GM10248 (cell line): ENCODE measurements at regions of chr6 and their contacts with region 1.

Region 1: DNA sequence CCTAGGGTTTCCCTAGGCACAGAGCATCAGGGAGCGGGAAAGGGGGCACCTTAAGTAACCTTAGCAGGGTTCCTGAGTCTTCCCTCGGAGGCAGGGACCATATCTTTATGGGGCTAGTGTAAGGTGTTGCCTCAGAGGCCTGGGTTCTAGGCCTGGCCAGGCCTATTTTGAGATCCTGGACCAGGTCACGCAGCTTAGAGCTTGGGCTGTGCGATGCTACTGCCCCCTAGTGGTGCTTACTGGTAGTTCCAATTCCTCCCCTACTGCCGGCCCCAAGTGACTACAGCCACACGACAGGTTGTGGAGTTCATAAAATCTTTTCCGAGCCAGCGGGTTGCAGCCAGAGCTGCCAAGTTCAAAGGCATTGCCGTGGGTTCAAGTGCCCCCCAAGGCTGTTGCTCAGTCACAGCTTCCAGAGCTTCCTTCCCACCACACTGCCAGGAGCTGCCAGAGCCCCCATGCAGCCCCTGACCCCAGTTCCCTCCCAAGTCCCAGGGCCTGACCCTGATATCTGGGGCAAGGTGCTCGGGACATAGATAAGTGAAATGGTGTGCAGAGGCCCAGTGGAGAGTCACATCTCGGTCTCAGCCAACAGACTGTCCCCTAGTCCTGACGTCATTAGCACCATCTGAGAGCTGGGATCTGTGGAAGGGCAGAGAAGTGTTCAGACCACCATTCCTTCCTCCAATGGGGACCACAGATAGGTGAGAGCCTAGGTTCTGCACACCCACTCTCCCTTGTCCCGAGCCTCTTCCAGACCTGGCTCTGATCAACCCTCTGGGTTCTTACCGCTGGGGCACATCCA is 3.3 kb downstream of the LRRC73 start:
- DNase-seq: peak; percentile 86
- CTCF ChIP-seq: peak; percentile 92

Region 2: GRCh38 chr6:43254138-43254817 is 252.6 kb before region 1 on chr6:
- CTCF ChIA-PET with region 1: interaction called, 16 read pairs
- POLR2A ChIA-PET with region 1: no interaction called
- DNase-seq: no peak
- CTCF ChIP-seq: no peak

Region 3: DNA sequence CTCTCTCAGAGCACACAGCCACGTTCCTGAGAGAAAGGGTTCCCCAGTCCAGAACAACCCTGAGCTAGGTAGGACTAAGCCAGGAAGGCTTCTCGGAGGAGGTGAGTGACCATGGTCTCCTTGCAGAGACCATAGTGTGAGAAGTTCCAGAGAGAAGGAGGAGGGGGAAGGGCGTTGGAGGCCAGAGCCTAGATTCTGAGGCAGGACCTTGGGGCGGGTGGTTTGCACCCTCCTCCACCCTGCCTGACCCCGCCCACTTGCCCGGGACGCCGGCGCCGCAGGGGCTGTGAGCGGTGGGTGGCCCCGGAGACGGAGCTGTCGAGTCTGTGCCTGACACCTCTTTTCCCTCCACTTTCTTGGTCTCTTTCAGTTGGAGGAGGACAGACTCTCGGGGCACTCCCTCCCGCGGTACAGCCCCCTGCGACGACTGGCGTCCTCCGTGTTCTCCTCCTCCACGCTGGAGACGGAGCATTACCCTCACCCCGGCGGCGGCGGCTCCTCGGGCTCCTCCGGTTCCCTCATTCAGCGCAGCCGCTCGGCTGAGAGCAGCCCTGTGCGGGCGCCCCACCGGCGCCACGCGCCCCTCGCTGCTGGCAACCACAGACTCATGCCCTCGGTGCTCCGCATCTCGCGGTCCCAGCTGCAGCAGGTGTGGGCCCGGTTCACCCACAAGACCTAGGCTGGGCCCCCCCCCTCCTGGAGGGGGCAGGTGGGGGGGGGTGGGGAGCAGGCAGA is 237.4 kb before region 1 on chr6:
- CTCF ChIA-PET with region 1: interaction called, 77 read pairs
- POLR2A ChIA-PET with region 1: no interaction called
- DNase-seq: no peak
- CTCF ChIP-seq: no peak

Region 4: GRCh38 chr6:43454696-43455530 is 52.0 kb before region 1 on chr6:
- CTCF ChIA-PET with region 1: interaction called, 70 read pairs
- POLR2A ChIA-PET with region 1: no interaction called
- DNase-seq: peak; percentile 67
- CTCF ChIP-seq: no peak

Region 5: DNA sequence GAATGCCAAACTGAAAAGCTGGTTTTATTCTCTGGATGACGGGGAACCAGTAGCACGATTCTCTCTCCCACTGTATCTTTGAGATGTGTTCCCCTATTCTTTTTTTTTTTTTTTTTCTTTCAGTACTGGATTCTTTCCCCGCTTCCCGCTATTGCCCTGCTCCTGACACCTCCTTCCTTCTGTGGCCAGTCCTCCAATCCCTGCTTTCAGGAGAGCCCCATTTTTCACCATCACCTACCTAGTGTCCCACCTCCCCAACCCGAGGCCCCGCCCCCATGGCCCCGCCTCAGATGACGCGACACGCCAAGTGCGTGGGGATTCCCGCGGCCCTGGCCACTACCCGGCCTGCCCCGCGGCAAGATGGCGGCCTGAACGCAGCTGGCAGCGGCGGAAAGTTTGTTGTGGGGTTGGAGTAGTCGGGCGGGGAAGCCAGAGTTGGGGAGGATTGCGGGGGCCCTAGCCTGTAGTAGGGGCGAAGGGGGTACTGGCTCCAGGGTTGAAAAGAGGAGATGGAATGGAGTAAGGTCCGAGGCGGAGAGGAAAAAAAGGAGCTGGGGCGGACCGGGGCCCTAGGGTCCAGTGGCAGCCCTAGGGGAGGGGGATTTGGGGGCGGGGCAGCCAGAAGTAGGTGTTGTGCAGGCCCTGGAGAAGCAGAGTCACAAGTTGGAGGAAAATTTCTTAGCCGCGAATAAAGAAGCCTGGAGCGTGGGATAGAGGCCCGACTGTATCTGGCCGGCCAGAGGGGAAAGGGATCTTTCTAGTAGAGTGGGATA is 29.4 kb before region 1 on chr6 and contains the start of gene TJAP1:
- CTCF ChIA-PET with region 1: interaction called, 21 read pairs
- POLR2A ChIA-PET with region 1: interaction called, 4 read pairs
- DNase-seq: peak; percentile 96
- CTCF ChIP-seq: no peak

Region 6: DNA sequence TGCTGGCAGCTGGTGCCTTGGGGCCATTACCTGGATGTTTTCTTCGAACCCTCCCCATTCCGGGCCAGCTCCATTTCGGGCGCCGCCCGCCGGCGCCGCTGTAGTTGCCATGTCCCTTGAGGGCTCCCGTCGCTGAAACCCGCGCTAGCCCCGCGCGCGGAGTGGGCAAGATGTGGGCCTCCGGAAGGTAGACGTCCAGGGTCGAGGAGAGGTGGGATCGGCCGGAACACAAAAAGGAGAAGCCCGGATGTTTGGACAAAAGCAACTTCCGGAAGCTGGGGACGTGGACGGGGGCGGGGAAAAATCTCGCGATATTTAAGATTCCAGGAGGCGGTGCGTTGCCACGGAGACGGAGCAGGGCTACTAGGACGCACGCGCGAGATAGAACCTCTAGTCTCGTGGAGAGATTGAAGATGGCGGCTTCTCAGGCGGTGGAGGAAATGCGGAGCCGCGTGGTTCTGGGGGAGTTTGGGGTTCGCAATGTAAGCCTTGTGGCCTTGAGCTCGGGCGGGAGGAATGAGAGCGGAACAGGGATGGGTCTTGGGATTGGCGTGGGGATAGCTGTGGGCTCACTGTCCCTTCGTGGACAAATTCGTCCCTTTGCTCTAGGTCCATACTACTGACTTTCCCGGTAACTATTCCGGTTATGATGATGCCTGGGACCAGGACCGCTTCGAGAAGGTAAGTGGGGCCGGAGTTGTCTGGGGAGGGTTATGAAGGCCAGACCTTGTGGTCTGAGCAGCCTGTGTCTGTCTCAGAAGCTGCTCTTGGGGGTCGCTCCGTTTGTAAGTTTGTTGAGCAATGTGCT is 10.0 kb after region 1 on chr6 and contains the starts of genes POLR1C and YIPF3:
- CTCF ChIA-PET with region 1: interaction called, 56 read pairs
- POLR2A ChIA-PET with region 1: no interaction called
- DNase-seq: peak; percentile 98
- CTCF ChIP-seq: no peak

Region 7: GRCh38 chr6:43532201-43532600 is 25.3 kb after region 1 on chr6:
- CTCF ChIA-PET with region 1: interaction called, 12 read pairs
- POLR2A ChIA-PET with region 1: no interaction called
- DNase-seq: no peak
- CTCF ChIP-seq: no peak

Region 8: GRCh38 chr6:44630125-44631028 is 1123.5 kb after region 1 on chr6:
- CTCF ChIA-PET with region 1: no interaction called
- POLR2A ChIA-PET with region 1: no interaction called
- DNase-seq: peak; percentile 47
- CTCF ChIP-seq: no peak